MCF 10A (cell line): ENCODE measurements at regions of chr19 and their contacts with region 1.

Region 1: DNA sequence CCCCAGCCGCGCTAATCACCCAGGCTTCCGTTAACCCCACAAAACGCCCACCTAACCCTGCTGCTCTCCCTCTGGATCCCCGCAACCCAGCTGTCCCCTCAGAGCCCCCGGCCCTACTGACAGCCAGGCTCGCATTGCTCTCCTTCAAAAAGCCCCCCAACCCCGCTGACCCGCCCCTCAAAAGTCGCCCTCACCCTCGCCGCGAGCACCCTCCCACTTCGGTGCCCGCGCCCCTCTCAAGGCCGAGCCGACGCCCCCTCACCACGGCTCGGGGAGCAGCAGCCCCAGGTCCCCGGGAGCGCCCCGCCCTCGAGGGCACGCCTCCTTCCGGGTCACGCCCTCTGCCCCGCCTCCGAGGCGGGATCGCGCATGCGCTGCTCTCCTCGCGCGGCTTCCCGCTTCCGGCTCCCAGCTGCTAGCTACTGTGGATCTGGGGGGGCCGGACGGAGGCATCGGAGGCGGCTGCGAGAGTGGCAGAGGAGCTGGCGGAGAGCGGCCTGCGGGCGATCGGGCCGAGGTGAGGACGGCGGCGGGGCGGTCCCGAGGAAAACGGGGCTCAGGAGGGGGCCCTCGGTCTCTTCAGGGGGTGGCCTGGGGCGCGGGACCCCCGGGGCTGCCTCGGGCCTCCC is 46.1 kb downstream of the ARHGEF18 start:
- DNase-seq: peak; percentile 92
- H3K4me3 Mint-ChIP-seq: peak overlapping the region; percentile 90
- H3K27ac Mint-ChIP-seq: peak overlapping the region; percentile 90
- H3K4me1 Mint-ChIP-seq: peaks cover 22% of the 10 kb centered on the region
- H3K27me3 Mint-ChIP-seq: no peaks in the 10 kb centered on the region
- CTCF ChIP-seq: no peak

Region 2: DNA sequence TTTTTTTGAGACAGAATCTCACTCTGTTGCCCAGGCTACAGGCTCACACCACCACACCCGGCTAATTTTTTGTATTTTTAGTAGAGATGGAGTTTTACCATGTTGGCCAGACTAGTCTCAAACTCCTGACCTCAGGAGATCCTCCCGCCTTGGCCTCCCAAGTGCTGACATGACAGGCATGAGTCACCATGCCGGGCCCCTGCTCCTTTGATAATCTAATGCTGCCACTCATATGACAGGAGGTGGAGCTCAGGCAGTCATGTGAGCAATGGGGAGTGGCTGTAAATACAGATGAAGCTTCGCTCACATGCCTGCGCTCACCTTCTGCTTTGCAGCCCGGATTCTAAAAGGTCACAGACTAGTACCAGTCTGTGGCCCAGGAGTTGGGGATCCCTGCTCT is 21.0 kb before region 1 on chr19:
- CTCF ChIA-PET with region 1: interaction called, 10 read pairs
- POLR2A ChIA-PET with region 1: no interaction called
- intact Hi-C with region 1: no loop called
- DNase-seq: no peak
- H3K4me3 Mint-ChIP-seq: no peak overlapping the region
- H3K27ac Mint-ChIP-seq: no peak overlapping the region
- H3K4me1 Mint-ChIP-seq: peaks cover 5% of the 10 kb centered on the region
- H3K27me3 Mint-ChIP-seq: no peaks in the 10 kb centered on the region
- CTCF ChIP-seq: no peak

Region 3: DNA sequence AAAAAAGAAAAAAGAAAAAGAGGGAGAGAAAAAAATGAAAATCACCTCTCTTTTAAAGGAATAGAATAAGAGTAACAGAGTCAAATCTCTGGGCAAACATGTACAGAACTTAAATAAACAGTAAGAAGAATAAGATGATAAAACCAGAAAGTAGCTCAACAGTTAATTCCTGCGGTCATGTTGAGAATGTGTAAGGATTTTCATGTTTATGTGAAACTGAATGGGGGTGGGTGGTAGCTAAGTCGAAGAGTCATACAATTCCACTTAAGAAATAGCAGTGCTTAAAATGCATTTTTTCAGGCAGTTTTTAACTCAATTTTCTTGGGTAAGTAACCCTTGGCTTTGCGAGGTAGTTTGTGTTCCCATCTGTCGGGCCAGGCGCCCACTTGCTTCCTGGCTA is 33.1 kb after region 1 on chr19:
- CTCF ChIA-PET with region 1: interaction called, 4 read pairs
- POLR2A ChIA-PET with region 1: interaction called, 65 read pairs
- intact Hi-C with region 1: no loop called
- DNase-seq: no peak
- H3K4me3 Mint-ChIP-seq: no peak overlapping the region
- H3K27ac Mint-ChIP-seq: no peak overlapping the region
- H3K4me1 Mint-ChIP-seq: peaks cover 9% of the 10 kb centered on the region
- H3K27me3 Mint-ChIP-seq: no peaks in the 10 kb centered on the region
- CTCF ChIP-seq: no peak

Region 4: GRCh38 chr19:7506385-7507328 is 111.8 kb after region 1 on chr19:
- CTCF ChIA-PET with region 1: interaction called, 3 read pairs
- POLR2A ChIA-PET with region 1: interaction called, 3 read pairs
- intact Hi-C with region 1: loop called (anchors 10 kb)
- DNase-seq: peak; percentile 99
- H3K4me3 Mint-ChIP-seq: no peak overlapping the region
- H3K27ac Mint-ChIP-seq: no peak overlapping the region
- H3K4me1 Mint-ChIP-seq: peaks cover 16% of the 10 kb centered on the region
- H3K27me3 Mint-ChIP-seq: no peaks in the 10 kb centered on the region
- CTCF ChIP-seq: no peak

Region 5: GRCh38 chr19:7522072-7522922 is 127.5 kb after region 1 on chr19 and contains the start of gene MCOLN1:
- CTCF ChIA-PET with region 1: no interaction called
- POLR2A ChIA-PET with region 1: interaction called, 20 read pairs
- intact Hi-C with region 1: no loop called
- DNase-seq: peak; percentile 97
- H3K4me3 Mint-ChIP-seq: peak within 1 kb of the TSS; percentile 70
- H3K27ac Mint-ChIP-seq: peak within 1 kb of the TSS; percentile 33
- H3K4me1 Mint-ChIP-seq: peaks cover 9% of the 10 kb centered on the region
- H3K27me3 Mint-ChIP-seq: no peaks in the 10 kb centered on the region
- CTCF ChIP-seq: no peak
- total RNA-seq, gene MCOLN1: 10.8 and 13.9 TPM in 2 replicates